H1 (cell line): ENCODE measurements at regions of chr17 and their contacts with region 1.

Region 1: GRCh38 chr17:44919885-44920564 is 4.7 kb upstream of the GFAP start:
- DNase-seq: peak; percentile 56 to 80
- H3K4me3 ChIP-seq: 0 out of 8 replicates have a peak overlapping the region, but pooled peaks of 1 of the 4 experiments have one; percentile 10
- H3K27ac ChIP-seq: no peak overlapping the region
- H3K4me1 ChIP-seq: peaks cover 6 to 15% (median 9%) of the 10 kb centered on the region in 4 experiments
- H3K27me3 ChIP-seq: no peaks in the 10 kb centered on the region
- CTCF ChIP-seq: peak; percentile 93 to 96 (median 96)
- EP300 ChIP-seq: no peak
- POLR2A ChIP-seq: no peak
- RAD21 ChIP-seq: peak; percentile 93

Region 2: GRCh38 chr17:44636562-44636961 is 283.5 kb before region 1 on chr17:
- CTCF ChIA-PET with region 1: no interaction called
- POLR2A ChIA-PET with region 1: no interaction called
- DNase-seq: no peak
- H3K4me3 ChIP-seq: no peak overlapping the region
- H3K27ac ChIP-seq: no peak overlapping the region
- H3K4me1 ChIP-seq: 0 out of 7 replicates have a peak, but pooled peaks cover 0 to 2% (median 0%) of the 10 kb centered on the region in 4 experiments
- H3K27me3 ChIP-seq: no peaks in the 10 kb centered on the region
- CTCF ChIP-seq: peak in 2 of 3 experiments; percentile 11 to 16; a peak in 2 of 4 replicates
- EP300 ChIP-seq: no peak
- POLR2A ChIP-seq: no peak
- RAD21 ChIP-seq: peak; percentile 68 to 70

Region 3: DNA sequence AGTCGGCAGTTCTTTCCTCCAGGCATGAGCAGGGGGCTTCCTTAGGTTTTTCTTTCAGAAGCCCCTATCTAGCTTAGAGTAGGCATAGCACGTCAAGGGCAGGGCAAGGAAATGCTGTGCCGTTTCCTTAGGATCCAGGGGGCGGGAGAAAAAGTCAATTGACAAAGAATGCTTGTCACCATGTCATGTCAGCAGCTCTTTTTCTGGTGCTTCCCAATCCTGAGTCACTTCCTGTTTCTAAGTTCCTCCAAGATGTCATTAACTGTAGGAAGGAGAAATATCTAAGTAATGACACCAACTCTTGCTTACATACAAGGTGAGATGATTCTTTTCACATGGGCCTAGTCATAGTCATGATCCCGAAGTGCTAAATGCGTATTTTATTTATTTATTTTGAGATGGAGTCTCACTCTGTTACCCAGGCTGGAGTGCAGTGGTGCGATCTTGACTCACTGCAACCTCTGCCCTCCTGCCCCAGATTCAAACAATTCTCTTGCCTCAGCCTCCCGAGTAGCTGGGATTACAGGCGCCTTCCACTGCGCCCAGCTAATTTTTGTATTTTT is 125.1 kb before region 1 on chr17:
- CTCF ChIA-PET with region 1: no interaction called
- POLR2A ChIA-PET with region 1: no interaction called
- DNase-seq: no peak
- H3K4me3 ChIP-seq: no peak overlapping the region
- H3K27ac ChIP-seq: no peak overlapping the region
- H3K4me1 ChIP-seq: peaks cover 0 to 3% (median 1%) of the 10 kb centered on the region in 4 experiments; a peak in 2 of 7 replicates
- H3K27me3 ChIP-seq: no peaks in the 10 kb centered on the region
- CTCF ChIP-seq: no peak
- EP300 ChIP-seq: no peak
- POLR2A ChIP-seq: no peak
- RAD21 ChIP-seq: no peak

Region 4: DNA sequence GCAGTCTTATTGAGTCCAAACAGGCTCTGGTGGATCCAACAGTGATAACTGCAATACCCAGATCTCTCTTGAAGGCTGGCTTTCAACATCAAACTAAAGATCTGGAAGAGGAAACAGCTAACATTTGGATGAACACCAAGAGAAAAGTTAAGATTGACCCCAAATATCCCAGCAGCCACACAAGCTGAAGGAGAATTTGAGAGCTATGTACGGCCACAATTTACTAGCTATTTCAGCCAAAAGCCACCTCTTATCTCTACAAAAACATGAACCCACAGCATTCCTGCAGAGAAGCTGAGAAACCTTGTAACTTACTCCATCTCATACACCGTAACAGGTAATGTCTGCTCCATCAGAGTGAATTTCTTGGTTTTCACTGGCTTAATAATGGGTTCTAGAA is 35.1 kb before region 1 on chr17:
- CTCF ChIA-PET with region 1: no interaction called
- POLR2A ChIA-PET with region 1: no interaction called
- DNase-seq: no peak
- H3K4me3 ChIP-seq: no peak overlapping the region
- H3K27ac ChIP-seq: no peak overlapping the region
- H3K4me1 ChIP-seq: no peaks in the 10 kb centered on the region
- H3K27me3 ChIP-seq: no peaks in the 10 kb centered on the region
- CTCF ChIP-seq: no peak
- EP300 ChIP-seq: no peak
- POLR2A ChIP-seq: no peak
- RAD21 ChIP-seq: no peak

Region 5: GRCh38 chr17:44899069-44899782 is 20.8 kb before region 1 on chr17 and contains the start of gene EFTUD2:
- CTCF ChIA-PET with region 1: interaction called, 24 read pairs
- POLR2A ChIA-PET with region 1: interaction called, 8 read pairs
- DNase-seq: peak; percentile 67 to 96
- H3K4me3 ChIP-seq: peak within 1 kb of the TSS; percentile 85 to 100 (median 96)
- H3K27ac ChIP-seq: peak within 1 kb of the TSS; percentile 100
- H3K4me1 ChIP-seq: peaks cover 0 to 3% (median 1%) of the 10 kb centered on the region in 4 experiments; a peak in 1 of 7 replicates
- H3K27me3 ChIP-seq: no peaks in the 10 kb centered on the region; a peak in 1 of 7 replicates
- CTCF ChIP-seq: no peak
- EP300 ChIP-seq: 0 out of 3 replicates have a peak, but pooled peaks of 1 of the 2 experiments have one; percentile 43
- POLR2A ChIP-seq: peak in 1 of 2 experiments; percentile 91; a peak in 2 of 3 replicates
- RAD21 ChIP-seq: no peak
- total RNA-seq, gene EFTUD2: 174 and 195 TPM in 2 replicates

Region 6: DNA sequence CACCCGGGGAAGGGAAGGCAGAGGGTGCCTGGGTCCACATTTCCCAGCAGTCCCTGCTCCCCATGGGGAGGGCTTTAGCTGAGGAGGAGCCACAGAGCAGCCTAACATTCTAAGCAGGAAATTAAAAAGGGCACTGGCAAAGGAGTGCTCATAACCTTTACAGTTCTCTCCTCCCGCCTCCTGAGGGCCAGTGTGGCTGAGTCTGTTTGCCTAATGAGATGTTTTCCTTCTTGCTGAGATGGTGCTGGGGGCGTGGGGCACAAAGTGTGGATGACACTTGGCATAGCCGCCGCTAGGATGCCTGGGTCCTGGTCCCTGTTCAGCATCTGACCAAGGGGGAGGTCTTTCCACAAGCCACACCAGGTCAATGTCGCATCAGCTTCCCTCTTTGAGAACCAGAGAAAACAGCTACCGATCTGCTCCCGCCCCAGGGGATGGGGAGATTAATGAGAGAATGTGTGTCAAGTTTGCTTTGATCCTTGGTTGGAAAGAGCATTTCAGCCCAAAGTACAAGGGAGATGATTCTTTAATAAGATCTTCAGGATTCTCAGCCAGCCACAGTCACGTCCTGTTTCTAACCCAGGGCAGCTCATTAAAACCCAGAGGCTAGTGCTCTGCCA is 21.8 kb after region 1 on chr17:
- CTCF ChIA-PET with region 1: interaction called, 13 read pairs
- POLR2A ChIA-PET with region 1: interaction called, 25 read pairs
- DNase-seq: no peak
- H3K4me3 ChIP-seq: no peak overlapping the region
- H3K27ac ChIP-seq: no peak overlapping the region
- H3K4me1 ChIP-seq: 0 out of 7 replicates have a peak, but pooled peaks cover 0 to 2% (median 0%) of the 10 kb centered on the region in 4 experiments
- H3K27me3 ChIP-seq: no peaks in the 10 kb centered on the region
- CTCF ChIP-seq: no peak
- EP300 ChIP-seq: no peak
- POLR2A ChIP-seq: no peak
- RAD21 ChIP-seq: no peak

Region 7: GRCh38 chr17:44968226-44969143 is 48.5 kb after region 1 on chr17 and contains the start of gene C1QL1:
- CTCF ChIA-PET with region 1: interaction called, 182 read pairs
- POLR2A ChIA-PET with region 1: interaction called, 6 read pairs
- DNase-seq: peak; percentile 68 to 94
- H3K4me3 ChIP-seq: peak within 1 kb of the TSS; percentile 62 to 84 (median 66)
- H3K27ac ChIP-seq: no peak within 1 kb of the TSS
- H3K4me1 ChIP-seq: peaks cover 3 to 34% (median 20%) of the 10 kb centered on the region in 4 experiments
- H3K27me3 ChIP-seq: peaks cover 28 to 57% (median 53%) of the 10 kb centered on the region in 4 experiments
- CTCF ChIP-seq: peak; percentile 51 to 64 (median 63)
- EP300 ChIP-seq: no peak
- POLR2A ChIP-seq: no peak
- RAD21 ChIP-seq: peak; percentile 30 to 52; a peak in 3 of 4 replicates
- total RNA-seq, gene C1QL1: 7.5 and 7.6 TPM in 2 replicates

Region 8: GRCh38 chr17:44988044-44988942 is 68.3 kb after region 1 on chr17:
- CTCF ChIA-PET with region 1: interaction called, 10 read pairs
- POLR2A ChIA-PET with region 1: interaction called, 7 read pairs
- DNase-seq: peak in 1 of 2 experiments; percentile 60
- H3K4me3 ChIP-seq: peak overlapping the region; percentile 25 to 63 (median 32); a peak in 7 of 8 replicates
- H3K27ac ChIP-seq: no peak overlapping the region
- H3K4me1 ChIP-seq: peaks cover 0 to 7% (median 6%) of the 10 kb centered on the region in 4 experiments; a peak in 5 of 7 replicates
- H3K27me3 ChIP-seq: peaks cover 0 to 16% (median 8%) of the 10 kb centered on the region in 4 experiments; a peak in 5 of 7 replicates
- CTCF ChIP-seq: no peak
- EP300 ChIP-seq: no peak
- POLR2A ChIP-seq: no peak
- RAD21 ChIP-seq: no peak

Region 9: GRCh38 chr17:45003877-45004276 is 83.9 kb after region 1 on chr17:
- CTCF ChIA-PET with region 1: interaction called, 243 read pairs
- POLR2A ChIA-PET with region 1: interaction called, 4 read pairs
- DNase-seq: no peak
- H3K4me3 ChIP-seq: no peak overlapping the region
- H3K27ac ChIP-seq: no peak overlapping the region
- H3K4me1 ChIP-seq: peaks cover 5 to 21% (median 7%) of the 10 kb centered on the region in 4 experiments
- H3K27me3 ChIP-seq: peaks cover 0 to 6% (median 2%) of the 10 kb centered on the region in 4 experiments; a peak in 2 of 7 replicates
- CTCF ChIP-seq: no peak
- EP300 ChIP-seq: no peak
- POLR2A ChIP-seq: no peak
- RAD21 ChIP-seq: no peak

Region 10: GRCh38 chr17:45098869-45099616 is 179.0 kb after region 1 on chr17:
- CTCF ChIA-PET with region 1: interaction called, 13 read pairs
- POLR2A ChIA-PET with region 1: no interaction called
- DNase-seq: peak; percentile 63 to 95
- H3K4me3 ChIP-seq: no peak overlapping the region
- H3K27ac ChIP-seq: no peak overlapping the region
- H3K4me1 ChIP-seq: no peaks in the 10 kb centered on the region; a peak in 1 of 7 replicates
- H3K27me3 ChIP-seq: no peaks in the 10 kb centered on the region
- CTCF ChIP-seq: peak; percentile 78 to 96 (median 95)
- EP300 ChIP-seq: no peak
- POLR2A ChIP-seq: no peak
- RAD21 ChIP-seq: peak; percentile 73 to 76